ENCODE measurements at regions of chr19 and their contacts with region 1.

Region 1: GRCh38 chr19:10251792-10252694 is at the start of gene MRPL4:
- DNase-seq: peak; percentile 98
- H3K4me3 Mint-ChIP-seq: peak within 1 kb of the TSS; percentile 97
- H3K27ac Mint-ChIP-seq: peak within 1 kb of the TSS; percentile 96
- H3K4me1 Mint-ChIP-seq: peaks cover 20% of the 10 kb centered on the region
- H3K27me3 Mint-ChIP-seq: no peaks in the 10 kb centered on the region
- total RNA-seq, gene MRPL4: 106 to 115 TPM

Region 2: DNA sequence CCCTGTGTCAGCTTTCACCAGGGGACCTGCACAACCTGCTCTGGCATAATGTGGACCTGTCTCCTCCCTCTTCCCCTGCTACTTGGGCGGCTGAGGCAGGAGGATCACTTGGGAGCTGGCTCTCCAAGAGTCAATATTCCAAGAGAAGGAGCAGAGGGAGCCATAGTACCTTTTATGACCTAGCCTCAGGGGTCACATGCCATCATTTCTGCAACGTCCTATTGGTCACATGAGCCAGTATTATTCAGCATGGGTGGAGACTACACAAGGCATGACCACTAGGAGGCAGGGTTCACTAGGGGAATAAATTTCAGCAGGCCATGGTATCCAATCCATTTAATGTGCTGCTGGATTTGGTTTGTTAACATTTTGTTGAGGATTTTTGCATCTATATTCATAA is 177.9 kb before region 1 on chr19:
- CTCF ChIA-PET with region 1: interaction called, 3 read pairs
- POLR2A ChIA-PET with region 1: no interaction called
- intact Hi-C with region 1: loop called (anchors 2 kb)
- DNase-seq: peak; percentile 63
- H3K4me3 Mint-ChIP-seq: no peak overlapping the region
- H3K27ac Mint-ChIP-seq: no peak overlapping the region
- H3K4me1 Mint-ChIP-seq: no peaks in the 10 kb centered on the region
- H3K27me3 Mint-ChIP-seq: no peaks in the 10 kb centered on the region

Region 3: GRCh38 chr19:10112895-10113591 is 139.0 kb before region 1 on chr19:
- CTCF ChIA-PET with region 1: interaction called, 16 read pairs
- POLR2A ChIA-PET with region 1: interaction called, 3 read pairs
- intact Hi-C with region 1: loop called (anchors 5 kb)
- DNase-seq: peak; percentile 82
- H3K4me3 Mint-ChIP-seq: peak overlapping the region; percentile 67
- H3K27ac Mint-ChIP-seq: peak overlapping the region; percentile 95
- H3K4me1 Mint-ChIP-seq: peaks cover 57% of the 10 kb centered on the region
- H3K27me3 Mint-ChIP-seq: no peaks in the 10 kb centered on the region

Region 4: GRCh38 chr19:10189616-10190015 is 62.4 kb before region 1 on chr19:
- CTCF ChIA-PET with region 1: interaction called, 44 read pairs
- POLR2A ChIA-PET with region 1: interaction called, 3 read pairs
- intact Hi-C with region 1: loop called (anchors 2 kb)
- DNase-seq: peak; percentile 56
- H3K4me3 Mint-ChIP-seq: no peak overlapping the region
- H3K27ac Mint-ChIP-seq: peak overlapping the region; percentile 50
- H3K4me1 Mint-ChIP-seq: peaks cover 49% of the 10 kb centered on the region
- H3K27me3 Mint-ChIP-seq: no peaks in the 10 kb centered on the region

Region 5: DNA sequence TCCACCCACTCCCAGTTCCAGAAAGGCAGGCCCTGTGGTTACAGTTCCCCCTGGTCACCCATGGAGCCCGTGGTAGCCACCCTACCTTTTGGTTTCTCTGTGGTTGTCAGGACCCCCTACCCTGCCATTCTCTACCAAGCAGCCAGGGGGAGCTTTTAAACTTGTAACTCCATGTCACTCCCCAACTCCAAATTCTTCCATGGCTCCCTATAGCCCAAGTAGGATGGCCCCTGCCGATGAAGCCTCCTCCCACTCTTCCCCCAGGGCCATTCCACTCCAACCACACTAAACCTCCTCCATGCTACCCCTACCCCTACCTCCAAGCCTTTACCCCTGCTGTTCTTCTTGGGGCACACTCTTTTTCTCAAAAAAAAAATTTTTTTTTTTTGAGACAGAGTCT is 23.1 kb before region 1 on chr19:
- CTCF ChIA-PET with region 1: interaction called, 41 read pairs
- POLR2A ChIA-PET with region 1: interaction called, 4 read pairs
- intact Hi-C with region 1: loop called (anchors 1 kb)
- DNase-seq: peak; percentile 56
- H3K4me3 Mint-ChIP-seq: no peak overlapping the region
- H3K27ac Mint-ChIP-seq: peak overlapping the region; percentile 35
- H3K4me1 Mint-ChIP-seq: peaks cover 16% of the 10 kb centered on the region
- H3K27me3 Mint-ChIP-seq: no peaks in the 10 kb centered on the region

Region 6: DNA sequence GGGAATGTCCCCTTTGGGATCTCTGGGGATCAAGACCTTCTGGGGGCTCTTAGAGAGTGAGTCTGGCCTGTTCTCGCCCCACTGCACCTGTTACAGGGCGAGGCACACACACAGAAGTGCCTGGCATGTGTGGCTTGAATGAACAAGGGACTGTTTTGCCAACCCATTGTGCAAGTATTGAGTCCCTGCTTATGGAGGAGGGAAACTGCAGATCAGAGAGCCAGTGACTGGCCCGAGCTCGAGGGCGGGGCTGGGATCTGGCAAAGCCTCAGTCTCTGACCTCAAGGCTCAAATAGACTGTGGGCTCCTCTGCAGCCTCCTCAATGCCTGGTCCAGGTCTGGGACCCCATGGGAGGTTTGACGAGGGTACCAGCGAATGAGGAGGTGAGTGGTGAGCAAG is 75.8 kb after region 1 on chr19:
- CTCF ChIA-PET with region 1: no interaction called
- POLR2A ChIA-PET with region 1: no interaction called
- intact Hi-C with region 1: no loop called
- DNase-seq: no peak
- H3K4me3 Mint-ChIP-seq: no peak overlapping the region
- H3K27ac Mint-ChIP-seq: no peak overlapping the region
- H3K4me1 Mint-ChIP-seq: peaks cover 19% of the 10 kb centered on the region
- H3K27me3 Mint-ChIP-seq: no peaks in the 10 kb centered on the region